Calu3 (cell line): ENCODE measurements at regions of chrX and their contacts with region 1.

Region 1: GRCh38 chrX:106791495-106791894 is 11.0 kb upstream of the TBC1D8B start:
- DNase-seq: no peak
- H3K4me3 Mint-ChIP-seq: no peak overlapping the region
- H3K27ac Mint-ChIP-seq: no peak overlapping the region
- H3K4me1 Mint-ChIP-seq: peaks cover 8% of the 10 kb centered on the region
- H3K27me3 Mint-ChIP-seq: no peaks in the 10 kb centered on the region
- CTCF ChIP-seq: no peak

Region 2: GRCh38 chrX:106415276-106415895 is 376.1 kb before region 1 on chrX:
- CTCF ChIA-PET with region 1: no interaction called
- intact Hi-C with region 1: loop called (anchors 2 kb)
- DNase-seq: peak; percentile 22
- H3K4me3 Mint-ChIP-seq: no peak overlapping the region
- H3K27ac Mint-ChIP-seq: no peak overlapping the region
- H3K4me1 Mint-ChIP-seq: no peaks in the 10 kb centered on the region
- H3K27me3 Mint-ChIP-seq: peaks cover 35% of the 10 kb centered on the region
- CTCF ChIP-seq: peak; percentile 61

Region 3: GRCh38 chrX:106611679-106612392 is 179.7 kb before region 1 on chrX and contains the start of gene RADX:
- CTCF ChIA-PET with region 1: no interaction called
- intact Hi-C with region 1: loop called (anchors 5 kb)
- DNase-seq: peak; percentile 74
- H3K4me3 Mint-ChIP-seq: peak within 1 kb of the TSS; percentile 69
- H3K27ac Mint-ChIP-seq: peak within 1 kb of the TSS; percentile 71
- H3K4me1 Mint-ChIP-seq: peaks cover 15% of the 10 kb centered on the region
- H3K27me3 Mint-ChIP-seq: no peaks in the 10 kb centered on the region
- CTCF ChIP-seq: no peak
- total RNA-seq, gene RADX: 3.4 and 4.3 TPM in 2 replicates

Region 4: DNA sequence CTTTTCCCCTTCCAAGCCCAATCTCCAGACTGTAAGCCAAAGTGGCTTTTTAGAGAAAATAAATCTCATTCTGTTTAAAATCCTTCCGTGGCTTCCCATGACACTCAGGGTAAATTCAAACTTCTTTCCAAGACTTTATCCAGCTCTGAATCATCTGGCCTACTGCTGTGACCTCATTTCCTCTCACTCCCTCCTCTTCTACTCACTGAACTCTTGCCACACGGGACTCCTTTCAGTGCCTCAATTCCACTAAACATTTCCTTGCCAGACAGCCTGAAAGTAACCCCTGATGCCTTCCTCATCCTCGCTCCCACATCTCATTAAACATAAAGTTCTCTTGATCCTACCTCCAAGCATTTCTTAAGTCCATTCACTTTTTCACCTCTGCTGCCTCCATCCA is 92.8 kb before region 1 on chrX:
- CTCF ChIA-PET with region 1: no interaction called
- intact Hi-C with region 1: no loop called
- DNase-seq: no peak
- H3K4me3 Mint-ChIP-seq: no peak overlapping the region
- H3K27ac Mint-ChIP-seq: no peak overlapping the region
- H3K4me1 Mint-ChIP-seq: peaks cover 26% of the 10 kb centered on the region
- H3K27me3 Mint-ChIP-seq: no peaks in the 10 kb centered on the region
- CTCF ChIP-seq: no peak

Region 5: GRCh38 chrX:107135049-107135964 is 343.8 kb after region 1 on chrX:
- CTCF ChIA-PET with region 1: no interaction called
- intact Hi-C with region 1: no loop called
- DNase-seq: peak; percentile 61
- H3K4me3 Mint-ChIP-seq: peak overlapping the region; percentile 57
- H3K27ac Mint-ChIP-seq: peak overlapping the region; percentile 97
- H3K4me1 Mint-ChIP-seq: peaks cover 42% of the 10 kb centered on the region
- H3K27me3 Mint-ChIP-seq: no peaks in the 10 kb centered on the region
- CTCF ChIP-seq: no peak